ENCODE measurements at regions of chr10 and their contacts with region 1.

Region 1: GRCh38 chr10:3785257-3785850 is 345 bp upstream of the KLF6 start:
- DNase-seq: peak; percentile 99 to 100 (median 99)
- ATAC-seq: peak; percentile 82
- H3K4me3 ChIP-seq: peak overlapping the region; percentile 93
- H3K4me1 ChIP-seq: peaks cover 18% of the 10 kb centered on the region
- CTCF ChIP-seq: no peak

Region 2: DNA sequence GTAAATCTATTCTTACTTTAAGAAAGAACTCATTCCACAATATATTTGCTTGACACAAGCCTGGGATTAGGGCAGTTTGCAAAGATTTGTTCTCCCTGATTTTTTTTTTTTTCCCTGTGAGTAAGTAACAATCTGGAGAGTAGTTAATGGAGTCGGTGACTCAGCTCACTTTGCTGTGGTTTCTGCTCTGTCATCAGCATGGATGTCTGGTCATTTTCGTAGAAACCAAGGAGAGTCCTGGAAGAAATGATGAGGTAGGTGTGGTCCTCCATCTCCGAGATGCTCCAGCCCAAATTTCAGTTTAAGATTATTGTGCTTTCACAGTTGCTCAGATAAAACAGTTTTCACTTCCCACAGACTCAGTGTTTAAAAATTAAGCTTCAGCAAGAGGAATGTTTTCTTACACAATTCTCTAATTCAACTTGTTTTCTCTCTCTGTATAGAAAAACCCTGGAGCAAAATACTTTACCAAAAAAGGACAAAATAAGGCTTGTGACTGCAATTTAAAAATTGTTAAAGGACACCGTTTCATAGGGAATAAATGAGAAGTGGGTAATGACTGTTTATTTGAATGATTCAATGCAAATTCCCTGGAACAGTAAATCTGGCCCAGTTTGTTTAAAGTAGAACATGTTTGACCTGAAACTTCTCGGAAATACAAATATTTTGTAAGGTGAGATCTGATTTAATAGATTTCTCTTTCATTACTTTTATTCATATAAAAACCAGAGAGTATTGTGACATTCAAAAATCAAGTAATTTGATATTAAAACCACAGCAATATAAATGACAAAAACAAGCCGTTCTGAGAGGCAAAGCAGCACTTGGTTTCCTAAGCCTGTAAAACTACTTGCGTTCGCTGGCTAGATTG is 536.2 kb before region 1 on chr10:
- intact Hi-C with region 1: loop called in 1 of 2 experiments (anchors 10 kb)
- DNase-seq: no peak
- ATAC-seq: peak; percentile 47
- H3K4me3 ChIP-seq: no peak overlapping the region
- H3K4me1 ChIP-seq: no peaks in the 10 kb centered on the region
- CTCF ChIP-seq: no peak

Region 3: GRCh38 chr10:3467052-3467951 is 318.1 kb before region 1 on chr10:
- intact Hi-C with region 1: loop called in 1 of 2 experiments (anchors 10 kb)
- DNase-seq: peak; percentile 67 to 82 (median 73)
- ATAC-seq: peak; percentile 45
- H3K4me3 ChIP-seq: no peak overlapping the region
- H3K4me1 ChIP-seq: peaks cover 10% of the 10 kb centered on the region
- CTCF ChIP-seq: peak; percentile 9

Region 4: DNA sequence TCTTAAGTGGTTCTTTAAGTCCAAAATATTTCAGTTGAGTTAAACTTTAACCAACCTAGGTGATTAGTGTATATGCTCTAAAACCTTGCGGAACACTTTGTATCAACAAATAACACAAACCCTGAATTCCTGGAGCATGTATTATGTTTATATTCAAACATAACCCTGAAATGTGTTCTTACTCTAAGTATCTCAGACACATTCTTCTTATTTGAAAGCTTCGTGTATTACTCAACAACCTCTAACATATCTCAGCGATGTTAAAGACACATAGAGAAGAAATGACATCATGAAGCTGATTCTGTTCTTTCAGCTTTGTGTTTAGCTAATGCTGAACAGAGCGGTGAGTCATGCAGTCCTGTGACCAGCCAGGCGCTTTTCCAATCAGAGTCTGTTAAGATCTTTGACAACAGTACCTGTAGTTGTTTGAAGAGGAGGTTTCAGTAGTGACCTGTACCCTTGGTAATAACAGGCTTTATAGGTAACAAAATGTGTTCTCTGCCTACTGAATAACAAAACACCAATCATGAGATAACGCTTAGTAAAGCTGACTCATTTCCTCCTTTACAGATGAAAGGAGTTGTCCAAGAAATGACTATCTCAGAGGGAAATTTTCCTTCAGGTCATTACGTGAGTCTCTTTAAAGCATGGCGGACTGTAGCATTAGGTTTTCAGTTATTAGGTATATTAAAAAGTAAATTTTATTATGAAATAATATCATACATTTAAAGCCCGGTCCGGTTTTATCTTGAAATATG is 67.0 kb after region 1 on chr10:
- intact Hi-C with region 1: loop called in 1 of 2 experiments (anchors 10 kb)
- DNase-seq: peak; percentile 76 to 91 (median 84)
- ATAC-seq: peak; percentile 89
- H3K4me3 ChIP-seq: no peak overlapping the region
- H3K4me1 ChIP-seq: peaks cover 35% of the 10 kb centered on the region
- CTCF ChIP-seq: no peak

Region 5: DNA sequence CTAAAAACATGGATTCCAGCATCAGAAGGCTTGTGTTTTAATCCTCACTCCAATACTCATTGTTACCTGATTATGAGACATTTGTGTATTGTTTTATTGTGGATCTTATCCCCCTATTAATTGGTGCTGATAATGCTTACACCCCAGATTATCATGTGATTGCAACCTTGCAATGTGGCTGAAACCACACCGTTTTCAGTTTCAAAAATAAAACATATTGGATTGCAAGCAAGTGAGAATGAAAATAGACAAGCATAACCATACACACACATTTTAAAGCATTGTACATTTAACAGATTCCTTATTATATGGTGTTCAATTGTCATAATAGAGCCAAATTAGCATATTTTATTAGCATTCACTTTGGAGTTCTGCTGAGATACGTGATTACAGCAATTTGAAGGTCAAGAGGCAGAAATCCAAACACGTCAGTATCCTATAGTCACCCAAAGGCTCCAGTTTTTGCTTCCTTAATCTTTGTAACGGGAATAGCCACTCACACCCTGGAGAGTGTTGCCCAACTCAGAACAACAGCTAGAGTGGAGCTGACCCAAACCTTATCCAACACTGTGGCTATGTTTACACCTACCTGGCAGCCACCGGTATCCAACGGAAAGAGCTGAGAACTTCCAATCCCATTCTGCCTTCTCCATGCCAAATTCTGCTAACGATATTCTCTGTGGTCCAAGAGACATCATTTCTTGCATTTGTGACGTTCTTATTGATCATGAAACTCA is 316.7 kb after region 1 on chr10:
- intact Hi-C with region 1: no loop called
- DNase-seq: no peak
- ATAC-seq: no peak
- H3K4me3 ChIP-seq: no peak overlapping the region
- H3K4me1 ChIP-seq: no peaks in the 10 kb centered on the region
- CTCF ChIP-seq: no peak

Region 6: DNA sequence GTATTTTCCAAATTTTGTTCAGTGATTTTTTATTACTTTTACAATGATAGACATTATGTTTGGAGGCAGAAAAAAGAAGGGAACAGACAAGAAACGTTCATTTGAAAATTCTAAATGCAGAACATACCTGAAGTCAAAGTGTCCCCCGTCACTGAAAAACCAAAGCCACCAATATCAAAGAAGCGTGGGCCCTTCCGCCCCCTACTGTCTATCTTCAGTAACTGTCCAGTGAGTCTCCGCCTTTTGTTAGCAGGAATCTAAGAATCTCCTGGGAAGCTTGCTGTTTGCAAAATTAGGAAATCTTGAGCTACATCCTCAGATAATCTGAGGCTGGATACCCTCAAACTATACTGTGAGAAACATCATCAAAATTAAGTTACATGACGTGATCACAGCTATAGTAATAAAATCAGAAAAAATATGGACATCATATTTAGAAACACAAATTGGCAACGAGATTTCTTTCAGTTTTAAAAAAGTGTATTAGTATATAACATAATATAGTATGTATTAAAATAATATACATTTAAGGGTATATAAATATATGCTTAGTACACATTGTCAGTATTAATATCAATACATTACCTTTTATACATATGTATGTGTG is 871.3 kb after region 1 on chr10:
- intact Hi-C with region 1: loop called in 1 of 2 experiments (anchors 10 kb)
- DNase-seq: peak in 2 of 3 donors; percentile 57 to 64
- ATAC-seq: peak; percentile 74
- H3K4me3 ChIP-seq: no peak overlapping the region
- H3K4me1 ChIP-seq: peaks cover 6% of the 10 kb centered on the region
- CTCF ChIP-seq: peak; percentile 65